ENCODE measurements at regions of chr20 and their contacts with region 1.

Region 1: DNA sequence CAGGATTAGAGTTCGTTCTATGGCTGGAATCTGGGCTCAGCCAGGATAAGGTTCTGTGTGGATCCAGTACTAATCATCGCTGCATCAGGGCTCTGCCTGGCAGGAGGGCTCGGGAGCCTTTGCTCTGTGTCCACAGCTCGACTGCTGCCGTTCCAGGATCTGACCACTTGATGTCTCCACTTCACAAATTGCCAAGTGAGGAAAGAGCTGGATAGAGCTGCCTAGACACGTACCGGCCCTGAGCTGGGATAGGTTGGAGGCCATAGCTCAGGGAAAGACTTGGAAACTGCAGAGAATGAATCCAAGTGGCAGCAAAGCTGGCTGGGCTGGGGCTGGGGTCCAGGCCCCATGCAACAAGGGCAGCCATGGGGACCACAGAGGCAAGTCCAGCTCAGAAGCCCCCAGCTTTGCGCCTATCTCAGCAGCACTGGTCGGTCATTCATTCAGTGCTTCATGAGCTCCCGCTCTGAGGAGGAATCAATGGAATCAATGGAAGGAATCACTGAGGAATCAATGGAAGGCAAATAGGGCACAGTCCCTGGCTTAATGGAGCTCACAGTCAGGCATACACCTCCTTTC is 38.0 kb upstream of the TOP1 start:
- DNase-seq: peak; percentile 81
- ATAC-seq: peak; percentile 98

Region 2: GRCh38 chr20:40848526-40848925 is 142.1 kb before region 1 on chr20:
- intact Hi-C with region 1: no loop called
- DNase-seq: no peak
- ATAC-seq: no peak

Region 3: GRCh38 chr20:41017390-41018042 is 26.9 kb after region 1 on chr20:
- intact Hi-C with region 1: no loop called
- DNase-seq: no peak
- ATAC-seq: no peak

Region 4: GRCh38 chr20:41078329-41078728 is 87.7 kb after region 1 on chr20:
- intact Hi-C with region 1: loop called in 1 of 2 experiments (anchors 5 kb)
- DNase-seq: no peak
- ATAC-seq: peak; percentile 67 to 80

Region 5: DNA sequence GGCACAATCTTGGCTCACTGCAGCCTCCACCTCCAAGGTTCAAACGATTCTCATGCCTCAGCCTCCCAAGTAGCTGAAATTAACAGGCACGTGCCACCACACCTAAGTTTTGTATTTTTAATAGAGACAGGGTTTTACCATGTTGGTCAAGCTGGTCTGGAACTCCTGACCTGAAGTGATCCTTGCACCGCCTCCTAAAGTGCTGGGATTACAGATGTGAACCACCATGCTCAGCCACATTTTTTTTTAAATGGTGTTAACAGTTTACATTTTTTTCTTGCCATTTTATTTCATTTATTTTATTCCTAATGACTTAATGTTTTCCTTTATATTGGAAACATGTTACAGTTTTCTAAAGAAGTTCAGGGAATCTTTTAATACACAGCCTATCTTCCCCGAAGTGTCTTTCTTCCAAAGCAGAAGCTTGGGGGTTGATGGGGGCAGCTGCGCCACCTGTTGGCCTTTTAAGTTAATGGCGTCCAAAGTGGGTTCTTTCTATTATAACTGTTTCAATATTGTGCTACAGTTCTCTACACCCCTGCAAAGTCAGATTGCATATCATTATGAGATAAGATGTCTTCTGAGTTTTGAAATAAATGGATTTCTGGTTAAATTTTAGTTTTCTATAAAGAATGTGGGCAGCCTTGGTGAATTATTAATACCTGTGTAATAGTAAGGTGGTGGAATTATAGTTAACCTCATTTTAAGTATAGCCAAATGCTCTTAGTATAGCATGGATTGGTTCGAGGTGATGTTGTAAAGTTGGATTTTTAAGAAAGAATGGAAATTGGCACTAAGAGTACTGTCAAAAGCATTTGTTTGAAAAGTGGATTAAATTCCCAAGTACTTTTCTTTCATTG is 104.7 kb after region 1 on chr20:
- intact Hi-C with region 1: loop called (anchors 2 to 5 kb)
- DNase-seq: peak; percentile 61
- ATAC-seq: peak in 1 of 2 donors; percentile 74

Measured in left cardiac atrium (tissue), 4 donors.